ENCODE measurements at regions of chr3 and their contacts with region 1.

Region 1: GRCh38 chr3:171396048-171396447 is 64.2 kb downstream of the TNIK start:
- DNase-seq: no peak
- ATAC-seq: no peak

Region 2: DNA sequence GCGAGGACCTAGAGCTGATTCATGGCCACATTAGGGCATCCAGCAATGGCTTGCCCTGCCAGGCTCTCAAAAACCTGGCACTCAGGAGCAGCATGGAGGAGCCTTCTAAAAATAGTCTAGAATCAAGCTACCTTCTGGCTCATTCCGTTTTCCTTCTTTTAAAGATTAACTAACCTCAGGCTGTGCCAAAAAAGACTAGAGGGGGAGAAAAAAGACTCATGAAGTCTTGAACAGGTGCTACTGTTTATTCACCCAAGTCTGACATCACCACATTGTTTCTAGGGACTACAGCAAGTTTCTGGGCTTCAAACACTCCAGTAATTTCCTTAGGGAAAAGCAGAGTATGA is 61.6 kb before region 1 on chr3:
- intact Hi-C with region 1: loop called in 1 of 2 experiments (anchors 5 kb)
- DNase-seq: no peak
- ATAC-seq: peak; percentile 86 to 89

Measured in left cardiac atrium (tissue), 4 donors.